B cell (primary cell): ENCODE measurements at regions of chr17 and their contacts with region 1.

Region 1: GRCh38 chr17:75289115-75289831 is at the start of gene SLC25A19:
- DNase-seq: peak; percentile 98
- ATAC-seq: peak; percentile 84
- H3K4me3 ChIP-seq: peak within 1 kb of the TSS; percentile 77 to 88 (median 85)
- H3K4me3 Mint-ChIP-seq: peak within 1 kb of the TSS; percentile 98
- H3K27ac ChIP-seq: peak within 1 kb of the TSS; percentile 90 to 98
- H3K27ac Mint-ChIP-seq: peak within 1 kb of the TSS; percentile 100
- H3K4me1 ChIP-seq: peaks cover 23 to 44% of the 10 kb centered on the region in 2 donors
- H3K4me1 Mint-ChIP-seq: peaks cover 37% of the 10 kb centered on the region
- H3K27me3 ChIP-seq: no peaks in the 10 kb centered on the region
- H3K27me3 Mint-ChIP-seq: no peaks in the 10 kb centered on the region
- CTCF ChIP-seq: no peak
- total RNA-seq, gene SLC25A19: 46.4 and 52.3 TPM in 2 replicates

Region 2: DNA sequence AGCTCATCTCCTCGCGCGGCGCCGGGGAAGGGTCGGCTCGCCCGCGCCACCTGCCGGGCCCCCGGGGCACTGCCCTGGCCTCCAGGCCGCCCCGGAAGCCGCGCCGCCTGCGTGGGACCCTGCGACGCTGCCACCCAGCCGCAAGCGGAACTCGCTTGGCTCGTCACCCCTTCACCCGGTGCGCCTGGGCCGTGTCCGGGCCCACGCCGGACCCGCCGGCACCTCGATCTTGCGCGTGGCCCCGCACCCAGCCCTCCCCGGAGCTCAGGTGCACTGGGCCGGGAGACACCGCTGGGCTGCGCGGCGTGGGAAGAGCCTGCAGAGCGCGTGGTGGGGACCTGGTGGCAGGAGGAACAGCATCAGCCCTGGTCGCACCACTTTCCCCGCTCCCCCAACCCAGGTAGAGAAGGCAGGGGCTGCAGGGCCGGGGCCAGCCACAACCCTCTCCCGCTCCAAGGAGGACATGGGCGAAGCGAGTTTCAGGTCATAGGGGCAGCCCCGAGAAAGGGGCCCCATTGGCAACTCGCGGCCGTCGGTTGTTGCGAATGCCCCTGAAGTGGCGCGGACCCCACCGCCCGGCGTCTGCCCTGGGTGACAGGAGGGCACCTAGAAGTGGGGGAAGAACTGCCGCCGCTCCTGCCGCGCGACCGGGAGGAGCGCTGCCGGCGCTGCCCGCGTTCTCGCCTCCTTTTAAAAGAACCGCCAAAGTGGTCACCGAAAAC is 17.9 kb before region 1 on chr17:
- CTCF ChIA-PET with region 1: interaction called, 52 read pairs
- POLR2A ChIA-PET with region 1: interaction called, 23 read pairs
- intact Hi-C with region 1: loop called (anchors 1 kb)
- DNase-seq: peak; percentile 94
- ATAC-seq: peak; percentile 90
- H3K4me3 ChIP-seq: peak overlapping the region; percentile 26 to 93 (median 74)
- H3K4me3 Mint-ChIP-seq: peak overlapping the region; percentile 88
- H3K27ac ChIP-seq: peak overlapping the region; percentile 78 to 83
- H3K27ac Mint-ChIP-seq: peak overlapping the region; percentile 82
- H3K4me1 ChIP-seq: peaks cover 17 to 28% of the 10 kb centered on the region in 2 donors
- H3K4me1 Mint-ChIP-seq: peaks cover 23% of the 10 kb centered on the region
- H3K27me3 ChIP-seq: no peaks in the 10 kb centered on the region
- H3K27me3 Mint-ChIP-seq: no peaks in the 10 kb centered on the region
- CTCF ChIP-seq: peak; percentile 73

Region 3: GRCh38 chr17:75345514-75346167 is 56.4 kb after region 1 on chr17:
- CTCF ChIA-PET with region 1: interaction called, 10 read pairs
- POLR2A ChIA-PET with region 1: interaction called, 12 read pairs
- intact Hi-C with region 1: loop called (anchors 1 kb)
- DNase-seq: peak; percentile 92
- ATAC-seq: peak; percentile 84
- H3K4me3 ChIP-seq: peak overlapping the region; percentile 48 to 70 (median 61)
- H3K4me3 Mint-ChIP-seq: peak overlapping the region; percentile 86
- H3K27ac ChIP-seq: peak overlapping the region; percentile 97 to 99
- H3K27ac Mint-ChIP-seq: peak overlapping the region; percentile 89
- H3K4me1 ChIP-seq: peaks cover 78 to 94% of the 10 kb centered on the region in 2 donors
- H3K4me1 Mint-ChIP-seq: peaks cover 85% of the 10 kb centered on the region
- H3K27me3 ChIP-seq: no peaks in the 10 kb centered on the region
- H3K27me3 Mint-ChIP-seq: no peaks in the 10 kb centered on the region
- CTCF ChIP-seq: no peak

Region 4: GRCh38 chr17:75405365-75406221 is 116.3 kb after region 1 on chr17 and contains the start of gene GRB2:
- CTCF ChIA-PET with region 1: interaction called, 76 read pairs
- POLR2A ChIA-PET with region 1: interaction called, 12 read pairs
- intact Hi-C with region 1: loop called (anchors 1 kb)
- DNase-seq: peak; percentile 98
- ATAC-seq: peak; percentile 89
- H3K4me3 ChIP-seq: peak within 1 kb of the TSS; percentile 91 to 99 (median 99)
- H3K4me3 Mint-ChIP-seq: peak within 1 kb of the TSS; percentile 98
- H3K27ac ChIP-seq: peak within 1 kb of the TSS; percentile 79 to 92
- H3K27ac Mint-ChIP-seq: peak within 1 kb of the TSS; percentile 97
- H3K4me1 ChIP-seq: peaks cover 32 to 43% of the 10 kb centered on the region in 2 donors
- H3K4me1 Mint-ChIP-seq: peaks cover 39% of the 10 kb centered on the region
- H3K27me3 ChIP-seq: no peaks in the 10 kb centered on the region
- H3K27me3 Mint-ChIP-seq: no peaks in the 10 kb centered on the region
- CTCF ChIP-seq: no peak
- total RNA-seq, gene GRB2: 219 and 224 TPM in 2 replicates

Region 5: DNA sequence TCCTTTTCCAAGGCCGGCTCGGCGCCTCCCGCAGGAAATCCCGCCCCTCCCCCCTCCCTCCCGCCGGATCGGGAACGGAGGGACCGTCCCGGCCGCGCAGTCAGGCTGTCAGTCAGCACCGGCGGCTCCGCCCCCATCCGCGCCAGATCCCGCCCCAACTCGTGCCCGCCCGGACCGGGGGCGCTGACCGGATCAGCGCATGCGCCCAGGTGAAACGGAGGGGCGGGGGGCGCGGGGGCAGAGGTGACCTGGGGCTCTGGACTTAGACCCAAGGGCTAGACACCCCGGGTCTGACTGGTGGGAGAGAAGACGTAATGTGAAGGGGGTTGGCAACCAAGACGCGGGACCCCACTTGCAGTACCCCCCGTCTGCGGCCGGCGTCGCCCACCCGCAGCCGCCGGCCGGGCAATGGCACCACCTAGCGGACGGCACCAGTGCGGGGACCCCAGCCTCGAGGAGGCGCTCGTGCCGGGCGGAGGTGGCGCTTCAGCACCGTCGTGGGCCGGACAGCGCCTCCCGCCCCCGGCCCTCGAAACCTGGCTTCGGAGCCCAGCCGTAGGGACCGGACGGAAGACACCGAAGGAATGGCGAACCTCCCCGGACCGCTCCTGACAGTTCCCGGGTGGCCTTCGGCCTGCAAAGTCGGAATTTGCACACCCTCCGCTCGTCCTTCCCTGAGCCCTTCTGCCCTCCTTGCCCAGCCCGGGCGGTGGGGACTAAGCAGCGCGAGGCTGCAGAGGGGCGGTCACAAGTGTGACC is 226.4 kb after region 1 on chr17 and contains the start of gene CASKIN2:
- CTCF ChIA-PET with region 1: interaction called, 6 read pairs
- POLR2A ChIA-PET with region 1: interaction called, 4 read pairs
- intact Hi-C with region 1: loop called (anchors 1 kb)
- DNase-seq: peak; percentile 90
- ATAC-seq: peak; percentile 67
- H3K4me3 ChIP-seq: peak within 1 kb of the TSS; percentile 38 to 96 (median 63)
- H3K4me3 Mint-ChIP-seq: peak within 1 kb of the TSS; percentile 78
- H3K27ac ChIP-seq: no peak within 1 kb of the TSS
- H3K27ac Mint-ChIP-seq: peak within 1 kb of the TSS; percentile 32
- H3K4me1 ChIP-seq: peaks cover 26 to 39% of the 10 kb centered on the region in 2 donors
- H3K4me1 Mint-ChIP-seq: peaks cover 19% of the 10 kb centered on the region
- H3K27me3 ChIP-seq: no peaks in the 10 kb centered on the region
- H3K27me3 Mint-ChIP-seq: no peaks in the 10 kb centered on the region
- CTCF ChIP-seq: peak; percentile 94
- total RNA-seq, gene CASKIN2: 0.37 and 0.97 TPM in 2 replicates

Region 6: GRCh38 chr17:75667021-75667790 is 377.9 kb after region 1 on chr17 and contains the starts of genes RECQL5 and SAP30BP:
- CTCF ChIA-PET with region 1: no interaction called
- POLR2A ChIA-PET with region 1: no interaction called
- intact Hi-C with region 1: loop called (anchors 10 kb)
- DNase-seq: peak; percentile 99
- ATAC-seq: peak; percentile 85
- H3K4me3 ChIP-seq: peak within 1 kb of the TSS; percentile 84 to 99 (median 98)
- H3K4me3 Mint-ChIP-seq: peak within 1 kb of the TSS; percentile 50
- H3K27ac ChIP-seq: peak within 1 kb of the TSS; percentile 84 to 89
- H3K27ac Mint-ChIP-seq: peak within 1 kb of the TSS; percentile 78
- H3K4me1 ChIP-seq: peaks cover 40 to 46% of the 10 kb centered on the region in 2 donors
- H3K4me1 Mint-ChIP-seq: peaks cover 34% of the 10 kb centered on the region
- H3K27me3 ChIP-seq: no peaks in the 10 kb centered on the region
- H3K27me3 Mint-ChIP-seq: no peaks in the 10 kb centered on the region
- CTCF ChIP-seq: no peak
- total RNA-seq, gene RECQL5: 56.6 and 58.5 TPM in 2 replicates
- total RNA-seq, gene SAP30BP: 148 and 174 TPM in 2 replicates